ENCODE measurements at regions of chr9 and their contacts with region 1.

Region 1: GRCh38 chr9:104743376-104743985 is 4.0 kb upstream of the NIPSNAP3A start:
- DNase-seq: peak; percentile 51
- ATAC-seq: peak; percentile 40
- H3K4me3 ChIP-seq: no peak overlapping the region
- H3K27ac ChIP-seq: no peak overlapping the region
- H3K4me1 ChIP-seq: peaks cover 0 to 6% of the 10 kb centered on the region in 2 experiments; a peak in 2 of 4 replicates
- H3K27me3 ChIP-seq: no peaks in the 10 kb centered on the region
- CTCF ChIP-seq: peak; percentile 54 to 86 (median 67)
- POLR2A ChIP-seq: no peak
- RAD21 ChIP-seq: peak; percentile 84

Region 2: DNA sequence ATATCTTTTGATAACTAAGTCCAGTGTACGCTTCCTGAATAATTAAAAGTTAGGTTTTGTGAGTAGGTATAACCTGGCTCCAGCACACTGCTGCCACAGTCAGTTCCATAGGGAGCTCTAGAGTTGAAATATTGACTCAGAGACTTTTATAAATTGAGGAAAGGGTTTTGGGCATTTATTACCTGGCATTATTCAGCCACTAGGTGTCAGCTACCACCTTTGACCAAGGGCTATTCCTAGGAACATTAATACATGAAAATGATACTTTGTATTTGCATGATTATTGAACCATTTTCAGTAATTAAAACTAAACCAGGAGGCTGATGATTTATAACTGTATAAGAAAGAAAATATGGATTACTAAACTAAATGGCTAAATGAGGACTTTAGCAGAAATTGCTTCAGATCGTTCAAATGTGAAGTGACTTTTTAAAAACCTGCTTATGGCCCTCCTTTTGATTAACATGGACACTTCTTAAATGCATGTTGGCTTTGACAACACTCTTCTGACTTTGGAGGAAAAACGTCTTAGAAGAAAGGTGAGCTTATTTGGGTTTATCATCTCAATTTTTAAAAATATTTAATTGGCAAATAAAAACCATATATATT is 566.4 kb before region 1 on chr9:
- CTCF ChIA-PET with region 1: no interaction called
- POLR2A ChIA-PET with region 1: no interaction called
- RAD21 ChIA-PET with region 1: interaction called, 3 to 4 read pairs
- intact Hi-C with region 1: loop called (anchors 1 kb)
- DNase-seq: peak; percentile 15
- ATAC-seq: peak; percentile 73
- H3K4me3 ChIP-seq: no peak overlapping the region
- H3K27ac ChIP-seq: no peak overlapping the region
- H3K4me1 ChIP-seq: no peaks in the 10 kb centered on the region
- H3K27me3 ChIP-seq: no peaks in the 10 kb centered on the region; the same call in 1 of the 2 replicates
- CTCF ChIP-seq: peak; percentile 35 to 66 (median 47); a peak in 5 of 6 replicates
- POLR2A ChIP-seq: no peak
- RAD21 ChIP-seq: peak; percentile 57

Region 3: DNA sequence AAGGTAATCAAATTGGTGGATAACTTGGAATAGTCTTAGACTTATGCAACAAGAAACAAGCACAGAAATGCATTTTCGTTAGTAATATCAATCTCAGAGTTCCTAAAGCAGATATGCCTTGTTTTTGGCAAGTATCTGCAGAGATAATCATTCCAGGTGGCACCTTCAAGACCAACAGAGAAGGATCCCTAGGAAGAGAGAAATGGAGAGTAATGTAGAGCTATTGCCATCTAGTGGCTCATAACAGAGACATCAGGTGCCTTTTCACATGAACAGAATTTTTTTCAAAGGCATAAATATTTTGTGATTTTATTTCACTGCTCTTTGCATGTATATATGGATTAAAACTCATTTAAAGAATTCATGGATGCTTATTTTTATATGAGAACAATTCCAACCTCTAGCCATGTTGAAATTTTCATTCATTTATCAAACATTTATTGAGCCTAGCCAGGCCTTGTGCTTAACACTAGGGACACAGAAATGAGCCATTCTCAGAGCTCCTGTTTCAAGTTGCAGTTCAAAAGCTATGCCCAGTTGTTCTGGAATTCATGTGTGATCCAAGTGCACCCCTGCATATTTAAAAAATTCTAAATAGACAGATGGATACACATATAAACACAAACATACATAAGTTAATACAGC is 356.9 kb before region 1 on chr9:
- CTCF ChIA-PET with region 1: no interaction called
- POLR2A ChIA-PET with region 1: no interaction called
- RAD21 ChIA-PET with region 1: no interaction called
- intact Hi-C with region 1: loop called (anchors 2 kb)
- DNase-seq: peak; percentile 22
- ATAC-seq: peak; percentile 70
- H3K4me3 ChIP-seq: no peak overlapping the region
- H3K27ac ChIP-seq: no peak overlapping the region
- H3K4me1 ChIP-seq: no peaks in the 10 kb centered on the region
- H3K27me3 ChIP-seq: peaks cover 5% of the 10 kb centered on the region; the same call in 1 of the 2 replicates
- CTCF ChIP-seq: peak; percentile 31 to 68 (median 61); a peak in 4 of 6 replicates
- POLR2A ChIP-seq: no peak
- RAD21 ChIP-seq: peak; percentile 69

Region 4: DNA sequence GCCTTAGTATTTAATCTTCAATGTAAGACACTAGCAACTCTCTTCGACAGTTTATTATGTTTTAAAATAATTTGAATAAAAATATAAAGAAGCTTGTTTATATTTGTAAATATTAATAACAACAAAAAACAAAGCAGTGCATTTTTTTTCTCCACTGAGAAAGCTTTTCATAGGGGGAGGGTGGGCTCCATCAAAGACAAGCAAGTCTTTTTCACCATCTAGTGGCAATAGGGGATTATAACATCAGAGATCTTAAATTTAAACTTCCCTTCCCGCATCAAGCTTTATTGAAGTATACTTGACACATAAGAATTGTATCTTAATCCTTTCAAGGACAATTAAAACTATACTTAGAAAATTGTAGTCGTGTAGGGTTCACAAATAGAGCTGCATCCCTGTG is 248.7 kb before region 1 on chr9:
- CTCF ChIA-PET with region 1: interaction called, 4 read pairs
- POLR2A ChIA-PET with region 1: no interaction called
- RAD21 ChIA-PET with region 1: no interaction called
- intact Hi-C with region 1: loop called (anchors 1 kb)
- DNase-seq: no peak
- ATAC-seq: 0 out of 2 replicates have a peak, but pooled peaks have one; percentile 36
- H3K4me3 ChIP-seq: no peak overlapping the region
- H3K27ac ChIP-seq: no peak overlapping the region
- H3K4me1 ChIP-seq: no peaks in the 10 kb centered on the region
- H3K27me3 ChIP-seq: no peaks in the 10 kb centered on the region
- CTCF ChIP-seq: peak in 2 of 3 experiments; percentile 10 to 19; a peak in 2 of 6 replicates
- POLR2A ChIP-seq: no peak
- RAD21 ChIP-seq: peak; percentile 36

Region 5: GRCh38 chr9:104682642-104683041 is 60.8 kb before region 1 on chr9:
- CTCF ChIA-PET with region 1: interaction called, 3 read pairs
- POLR2A ChIA-PET with region 1: no interaction called
- RAD21 ChIA-PET with region 1: no interaction called
- intact Hi-C with region 1: loop called (anchors 5 kb)
- DNase-seq: peak; percentile 53
- ATAC-seq: peak; percentile 87
- H3K4me3 ChIP-seq: no peak overlapping the region
- H3K27ac ChIP-seq: no peak overlapping the region
- H3K4me1 ChIP-seq: no peaks in the 10 kb centered on the region
- H3K27me3 ChIP-seq: no peaks in the 10 kb centered on the region
- CTCF ChIP-seq: peak; percentile 36 to 67 (median 47); a peak in 4 of 6 replicates
- POLR2A ChIP-seq: no peak
- RAD21 ChIP-seq: peak; percentile 73

Measured in HCT116 (cell line).